ENCODE measurements at regions of chr11 and their contacts with region 1.

Region 1: DNA sequence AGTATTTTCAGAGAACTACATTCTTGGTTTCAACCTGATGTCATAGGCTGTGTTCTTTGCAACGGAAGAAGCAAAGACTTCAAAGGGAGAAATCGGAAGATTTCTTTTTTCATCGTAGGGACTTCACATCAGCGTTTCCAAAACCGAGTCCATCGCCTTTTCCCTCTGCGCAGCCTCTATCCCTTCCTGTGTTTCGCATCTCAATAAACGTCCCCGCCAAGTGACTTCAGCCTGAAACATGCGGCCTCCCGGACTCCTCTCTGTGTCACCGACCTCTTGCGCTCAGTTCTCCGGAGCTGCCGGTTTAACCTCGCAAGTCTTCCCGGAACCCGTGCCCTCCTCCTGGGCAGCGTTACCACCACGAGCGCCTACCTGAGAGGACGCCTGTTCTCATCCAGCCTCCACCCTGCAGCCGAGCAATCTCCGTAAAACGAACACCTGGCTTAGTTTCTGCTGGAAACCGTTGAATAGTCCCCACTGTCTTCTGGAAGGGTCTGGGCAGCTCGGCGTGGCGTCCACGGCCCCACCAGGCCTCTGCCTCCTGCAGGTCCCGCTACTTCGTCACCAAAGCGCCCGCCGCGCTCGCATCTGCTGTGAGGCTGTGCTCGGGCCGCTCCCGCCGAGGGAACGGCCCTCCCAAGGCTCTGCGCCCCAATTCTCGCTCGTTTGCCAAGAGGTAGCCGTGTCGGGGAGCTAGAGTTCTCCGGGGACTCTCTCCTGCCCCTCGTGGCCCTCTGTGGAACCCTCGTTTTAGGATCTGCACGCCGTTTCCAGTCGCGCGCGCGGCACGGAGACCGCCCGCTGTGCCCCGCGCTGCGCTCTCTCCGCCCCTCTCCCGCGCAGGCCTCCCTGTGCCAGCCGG is at the start of gene GLB1L3:
- DNase-seq: peak; percentile 89
- H3K4me3 Mint-ChIP-seq: peak within 1 kb of the TSS; percentile 88
- H3K27ac Mint-ChIP-seq: peak within 1 kb of the TSS; percentile 95
- H3K4me1 Mint-ChIP-seq: peaks cover 56% of the 10 kb centered on the region
- H3K27me3 Mint-ChIP-seq: peaks cover 3% of the 10 kb centered on the region
- total RNA-seq, gene GLB1L3: 6.8 to 7.2 TPM

Region 2: GRCh38 chr11:133803026-133803425 is 472.7 kb before region 1 on chr11:
- CTCF ChIA-PET with region 1: no interaction called
- POLR2A ChIA-PET with region 1: no interaction called
- DNase-seq: no peak
- H3K4me3 Mint-ChIP-seq: no peak overlapping the region
- H3K27ac Mint-ChIP-seq: no peak overlapping the region
- H3K4me1 Mint-ChIP-seq: no peaks in the 10 kb centered on the region
- H3K27me3 Mint-ChIP-seq: peaks cover 4% of the 10 kb centered on the region

Region 3: GRCh38 chr11:134261626-134262488 is 13.9 kb before region 1 on chr11:
- CTCF ChIA-PET with region 1: interaction called, 28 read pairs
- POLR2A ChIA-PET with region 1: no interaction called
- DNase-seq: peak; percentile 66
- H3K4me3 Mint-ChIP-seq: no peak overlapping the region
- H3K27ac Mint-ChIP-seq: no peak overlapping the region
- H3K4me1 Mint-ChIP-seq: peaks cover 17% of the 10 kb centered on the region
- H3K27me3 Mint-ChIP-seq: no peaks in the 10 kb centered on the region

Region 4: DNA sequence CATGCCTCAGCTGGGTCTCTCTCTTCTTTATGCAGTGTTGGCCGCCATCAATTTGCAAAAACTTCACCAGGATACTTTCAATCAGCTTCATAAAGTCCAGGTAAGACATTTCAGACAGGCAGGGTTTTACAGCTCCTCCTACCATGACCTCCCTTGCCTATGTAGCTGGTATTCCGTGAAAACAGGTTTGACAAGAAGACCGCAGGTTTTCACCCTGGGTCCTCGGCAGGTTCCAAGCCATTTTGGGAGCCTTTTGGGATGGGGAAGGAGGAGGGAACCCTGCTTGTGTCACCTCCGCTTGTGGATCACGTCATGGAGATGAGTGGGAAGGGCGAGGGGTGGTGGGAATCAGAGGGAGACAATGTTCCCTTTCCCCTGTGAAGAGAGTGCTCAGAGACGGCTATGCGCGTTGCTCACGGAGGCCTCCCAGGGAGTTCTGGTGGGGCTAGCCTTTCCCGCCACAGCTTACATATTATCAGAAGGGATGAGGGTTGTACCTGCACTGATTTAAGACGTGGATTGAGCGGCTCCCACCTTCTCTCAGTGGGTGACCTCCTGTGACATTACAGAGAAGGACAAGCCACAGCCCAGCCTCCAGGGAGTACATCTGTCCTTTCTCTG is 17.5 kb after region 1 on chr11:
- CTCF ChIA-PET with region 1: interaction called, 15 read pairs
- POLR2A ChIA-PET with region 1: no interaction called
- DNase-seq: no peak
- H3K4me3 Mint-ChIP-seq: no peak overlapping the region
- H3K27ac Mint-ChIP-seq: peak overlapping the region; percentile 36
- H3K4me1 Mint-ChIP-seq: no peaks in the 10 kb centered on the region
- H3K27me3 Mint-ChIP-seq: no peaks in the 10 kb centered on the region

Measured in activated CD4-positive, alpha-beta T cell treated with anti-CD3 and anti-CD28 coated beads, Interleukin-2, amount 10 ng/mL, durations not matched to agents 7 days and 5 days (primary cell).